ENCODE measurements at regions of chr1 and their contacts with region 1.

Region 1: GRCh38 chr1:7667625-7668218 is 103.4 kb upstream of the VAMP3 start:
- DNase-seq: peak; percentile 77
- H3K4me3 ChIP-seq: no peak overlapping the region
- H3K27ac ChIP-seq: no peak overlapping the region
- H3K4me1 ChIP-seq: no peaks in the 10 kb centered on the region
- H3K27me3 ChIP-seq: no peaks in the 10 kb centered on the region
- CTCF ChIP-seq: peak; percentile 98 to 100
- POLR2A ChIP-seq: no peak

Region 2: GRCh38 chr1:7646981-7647901 is 20.5 kb before region 1 on chr1:
- CTCF ChIA-PET with region 1: interaction called, 11 read pairs
- POLR2A ChIA-PET with region 1: no interaction called
- dilution Hi-C with region 1: no loop called
- intact Hi-C with region 1: no loop called
- DNase-seq: peak; percentile 36
- H3K4me3 ChIP-seq: no peak overlapping the region
- H3K27ac ChIP-seq: no peak overlapping the region
- H3K4me1 ChIP-seq: peaks cover 3% of the 10 kb centered on the region
- H3K27me3 ChIP-seq: no peaks in the 10 kb centered on the region
- CTCF ChIP-seq: peak; percentile 90 to 91
- POLR2A ChIP-seq: no peak

Region 3: GRCh38 chr1:7694600-7695496 is 27.1 kb after region 1 on chr1:
- CTCF ChIA-PET with region 1: interaction called, 19 read pairs
- POLR2A ChIA-PET with region 1: no interaction called
- dilution Hi-C with region 1: no loop called
- intact Hi-C with region 1: no loop called
- DNase-seq: no peak
- H3K4me3 ChIP-seq: no peak overlapping the region
- H3K27ac ChIP-seq: no peak overlapping the region
- H3K4me1 ChIP-seq: no peaks in the 10 kb centered on the region
- H3K27me3 ChIP-seq: no peaks in the 10 kb centered on the region
- CTCF ChIP-seq: no peak
- POLR2A ChIP-seq: no peak

Region 4: GRCh38 chr1:7745791-7746190 is 78.1 kb after region 1 on chr1:
- CTCF ChIA-PET with region 1: interaction called, 674 read pairs
- POLR2A ChIA-PET with region 1: no interaction called
- dilution Hi-C with region 1: no loop called
- intact Hi-C with region 1: no loop called
- DNase-seq: no peak
- H3K4me3 ChIP-seq: no peak overlapping the region
- H3K27ac ChIP-seq: no peak overlapping the region
- H3K4me1 ChIP-seq: no peaks in the 10 kb centered on the region
- H3K27me3 ChIP-seq: no peaks in the 10 kb centered on the region
- CTCF ChIP-seq: no peak
- POLR2A ChIP-seq: no peak

Region 5: DNA sequence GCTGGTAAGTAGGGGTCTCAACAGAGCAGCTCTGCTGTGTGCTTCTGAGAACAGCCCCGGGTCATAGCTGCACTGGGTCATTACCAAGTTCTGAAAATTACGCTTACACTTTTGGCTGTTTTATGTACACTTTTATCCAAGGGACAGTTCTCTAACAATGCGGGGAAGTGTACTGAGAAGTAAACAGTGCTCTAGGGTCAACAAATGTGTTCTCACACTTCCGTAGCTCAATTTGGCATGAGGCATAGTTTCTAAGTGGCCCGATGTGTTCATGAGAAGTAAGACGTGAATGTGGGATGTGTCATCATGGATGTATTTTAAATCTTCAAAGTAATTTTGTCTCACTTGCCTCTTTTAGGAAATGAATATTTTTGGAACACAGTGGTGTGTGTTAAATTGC is 92.5 kb after region 1 on chr1:
- CTCF ChIA-PET with region 1: interaction called, 674 read pairs
- POLR2A ChIA-PET with region 1: no interaction called
- dilution Hi-C with region 1: no loop called
- intact Hi-C with region 1: no loop called
- DNase-seq: peak; percentile 55
- H3K4me3 ChIP-seq: no peak overlapping the region
- H3K27ac ChIP-seq: peak overlapping the region; percentile 43
- H3K4me1 ChIP-seq: no peaks in the 10 kb centered on the region
- H3K27me3 ChIP-seq: no peaks in the 10 kb centered on the region
- CTCF ChIP-seq: no peak
- POLR2A ChIP-seq: no peak

Region 6: DNA sequence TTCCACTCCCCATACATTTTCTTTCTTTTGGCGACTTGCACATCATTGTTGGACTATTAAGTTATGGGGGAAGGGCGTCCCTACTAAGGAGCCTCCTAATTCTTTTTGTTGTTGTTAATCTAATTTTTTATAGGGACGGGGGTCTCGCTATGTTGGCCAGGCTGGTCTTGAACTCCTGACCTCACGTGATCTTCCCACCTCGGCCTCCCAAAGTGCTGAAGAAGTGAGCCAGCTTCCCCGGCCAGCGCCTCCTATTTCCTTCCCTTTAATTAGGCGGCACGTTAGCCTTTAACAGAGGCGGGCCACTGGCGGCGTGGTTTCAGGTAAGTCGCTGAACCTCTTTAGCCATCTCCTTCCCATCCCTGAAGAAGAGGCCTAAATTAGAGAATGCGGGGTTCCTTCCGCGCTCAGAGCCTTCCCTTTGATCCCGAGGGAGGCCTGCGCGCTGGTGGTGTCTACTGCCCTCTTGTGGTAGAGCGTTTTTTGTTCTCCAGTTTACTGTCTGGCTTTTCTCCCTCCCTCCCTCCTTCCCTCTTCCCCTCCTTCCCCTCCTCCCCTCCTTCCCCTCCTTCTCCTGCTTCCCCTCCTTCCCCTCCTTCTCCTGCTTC is 234.9 kb after region 1 on chr1:
- CTCF ChIA-PET with region 1: interaction called, 100 read pairs
- POLR2A ChIA-PET with region 1: no interaction called
- dilution Hi-C with region 1: no loop called
- intact Hi-C with region 1: loop called (anchors 1 kb)
- DNase-seq: peak; percentile 58
- H3K4me3 ChIP-seq: no peak overlapping the region
- H3K27ac ChIP-seq: no peak overlapping the region
- H3K4me1 ChIP-seq: no peaks in the 10 kb centered on the region
- H3K27me3 ChIP-seq: peaks cover 0 to 3% of the 10 kb centered on the region in 2 experiments
- CTCF ChIP-seq: peak; percentile 59 to 80
- POLR2A ChIP-seq: no peak

Region 7: DNA sequence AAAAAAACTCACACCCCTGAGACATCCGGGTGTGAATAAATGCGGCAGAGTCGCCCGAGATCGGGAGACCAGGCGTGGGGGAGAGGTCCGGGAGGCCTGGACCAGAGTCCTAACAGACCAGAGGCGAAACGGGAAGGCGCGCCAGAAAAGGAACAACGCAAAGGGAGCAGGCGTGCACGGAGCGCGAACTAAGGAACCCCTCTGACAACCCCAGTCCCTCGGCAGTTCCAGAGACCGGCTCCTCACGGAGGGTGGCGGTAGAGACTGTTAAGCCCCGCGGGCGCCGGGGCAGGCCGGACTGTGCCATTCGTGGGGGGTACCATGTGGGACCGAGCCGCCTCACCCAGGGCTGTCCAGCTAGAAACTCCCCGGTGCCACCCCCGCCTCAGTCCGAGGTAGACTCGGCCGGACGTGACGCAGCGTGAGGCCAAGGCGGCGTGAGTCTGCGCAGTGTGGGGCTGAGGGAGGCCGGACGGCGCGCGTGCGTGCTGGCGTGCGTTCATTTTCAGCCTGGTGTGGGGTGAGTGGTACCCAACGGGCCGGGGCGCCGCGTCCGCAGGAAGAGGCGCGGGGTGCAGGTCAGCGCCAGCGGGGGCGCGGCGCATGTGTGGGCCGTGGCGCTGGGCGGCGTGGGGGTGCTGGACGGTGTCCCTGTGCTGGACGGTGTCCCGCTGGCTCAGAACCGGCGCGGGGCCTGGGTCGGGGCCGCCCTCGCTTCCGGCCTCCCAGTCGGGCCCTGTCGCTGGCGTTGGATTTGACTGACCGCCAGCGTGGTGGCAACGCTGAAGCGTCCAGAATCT is 293.7 kb after region 1 on chr1 and contains the start of gene PARK7:
- CTCF ChIA-PET with region 1: interaction called, 4 read pairs
- POLR2A ChIA-PET with region 1: no interaction called
- dilution Hi-C with region 1: no loop called
- intact Hi-C with region 1: loop called (anchors 1 kb)
- DNase-seq: peak; percentile 100
- H3K4me3 ChIP-seq: peak within 1 kb of the TSS; percentile 60 to 91 (median 81)
- H3K27ac ChIP-seq: peak within 1 kb of the TSS; percentile 82
- H3K4me1 ChIP-seq: peaks cover 14% of the 10 kb centered on the region
- H3K27me3 ChIP-seq: no peaks in the 10 kb centered on the region
- CTCF ChIP-seq: peak; percentile 22 to 64
- POLR2A ChIP-seq: peak; percentile 99
- total RNA-seq, gene PARK7: 289 and 294 TPM in 2 replicates

Measured in endothelial cell of umbilical vein (primary cell).